Adrenal gland (tissue), 19 donors: ENCODE measurements at regions of chr3 and their contacts with region 1.

Region 1: GRCh38 chr3:134388788-134389485 is 14.7 kb upstream of the AMOTL2 start:
- DNase-seq: peak in 1 of 7 donors; percentile 50
- H3K4me3 ChIP-seq: no peak overlapping the region
- H3K27ac ChIP-seq: no peak overlapping the region
- H3K4me1 ChIP-seq: no peaks in the 10 kb centered on the region
- H3K27me3 ChIP-seq: peaks cover 10% of the 10 kb centered on the region
- CTCF ChIP-seq: no peak
- POLR2A ChIP-seq: no peak

Region 2: DNA sequence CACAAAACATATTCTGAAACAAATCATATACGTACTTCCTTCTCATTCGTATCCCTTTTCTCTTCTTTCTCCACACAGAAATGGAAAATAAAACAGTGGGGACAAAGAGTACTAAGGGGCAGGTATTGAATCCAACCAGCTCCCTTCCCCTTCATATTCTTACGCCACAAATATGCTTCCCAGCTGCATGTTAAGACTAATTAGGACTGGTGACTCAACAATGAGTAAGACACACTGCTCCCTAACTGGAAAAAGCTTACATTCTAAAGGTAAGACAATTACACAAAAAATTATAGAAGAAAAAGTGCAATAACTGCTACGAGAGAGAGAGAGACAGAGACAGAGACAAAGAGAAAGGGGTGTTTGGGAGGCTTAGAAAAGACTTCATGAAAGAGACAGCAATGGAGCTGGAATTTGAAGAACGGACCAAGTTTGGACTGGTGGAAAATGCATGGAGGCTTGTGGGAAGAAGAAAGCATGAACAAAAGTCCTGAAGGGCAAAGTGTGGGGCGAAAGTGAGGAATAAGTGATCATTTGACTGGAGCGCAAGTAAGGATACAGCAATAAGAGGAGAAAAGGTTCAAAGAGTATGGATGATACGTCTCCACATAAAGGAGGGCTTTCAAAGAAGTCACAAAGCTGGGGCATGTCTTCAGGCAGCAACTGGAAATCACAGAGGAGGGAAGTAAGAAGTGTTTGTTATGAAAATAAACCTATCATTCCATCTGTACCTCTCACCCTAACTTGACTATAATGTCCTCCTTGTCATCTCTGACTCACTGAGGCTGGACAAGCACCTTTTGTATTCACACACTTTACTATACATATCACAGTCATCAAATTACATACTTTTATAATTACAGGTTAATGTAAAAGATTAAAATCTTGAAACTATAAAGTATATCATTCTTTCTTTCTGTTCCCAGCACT is 187.5 kb before region 1 on chr3:
- intact Hi-C with region 1: loop called in 1 of 2 experiments (anchors 5 kb)
- DNase-seq: no peak
- H3K4me3 ChIP-seq: no peak overlapping the region
- H3K27ac ChIP-seq: no peak overlapping the region
- H3K4me1 ChIP-seq: no peaks in the 10 kb centered on the region
- H3K27me3 ChIP-seq: no peaks in the 10 kb centered on the region
- CTCF ChIP-seq: no peak
- POLR2A ChIP-seq: no peak